Right lobe of liver (tissue), 6 donors: ENCODE measurements at regions of chr12 and their contacts with region 1.

Region 1: GRCh38 chr12:130044991-130045621 is 117.2 kb upstream of the FZD10 start:
- DNase-seq: peak; percentile 50 to 71 (median 71)
- ATAC-seq: peak; percentile 60 to 77 (median 66)
- H3K4me3 ChIP-seq: no peak overlapping the region
- H3K27ac ChIP-seq: peak overlapping the region in 1 of 3 donors; percentile 6
- H3K4me1 ChIP-seq: peaks cover 0 to 19% (median 9%) of the 10 kb centered on the region in 4 donors
- H3K27me3 ChIP-seq: no peaks in the 10 kb centered on the region
- CTCF ChIP-seq: no peak
- POLR2A ChIP-seq: no peak

Region 2: GRCh38 chr12:130335517-130336392 is 290.6 kb after region 1 on chr12:
- intact Hi-C with region 1: loop called (anchors 5 kb)
- DNase-seq: no peak
- ATAC-seq: peak; percentile 60 to 83 (median 78)
- H3K4me3 ChIP-seq: no peak overlapping the region
- H3K27ac ChIP-seq: no peak overlapping the region
- H3K4me1 ChIP-seq: no peaks in the 10 kb centered on the region
- H3K27me3 ChIP-seq: peaks cover 0 to 14% of the 10 kb centered on the region in 2 donors
- CTCF ChIP-seq: peak; percentile 69 to 77 (median 74)
- POLR2A ChIP-seq: no peak